ENCODE measurements at regions of chr12 and their contacts with region 1.

Region 1: DNA sequence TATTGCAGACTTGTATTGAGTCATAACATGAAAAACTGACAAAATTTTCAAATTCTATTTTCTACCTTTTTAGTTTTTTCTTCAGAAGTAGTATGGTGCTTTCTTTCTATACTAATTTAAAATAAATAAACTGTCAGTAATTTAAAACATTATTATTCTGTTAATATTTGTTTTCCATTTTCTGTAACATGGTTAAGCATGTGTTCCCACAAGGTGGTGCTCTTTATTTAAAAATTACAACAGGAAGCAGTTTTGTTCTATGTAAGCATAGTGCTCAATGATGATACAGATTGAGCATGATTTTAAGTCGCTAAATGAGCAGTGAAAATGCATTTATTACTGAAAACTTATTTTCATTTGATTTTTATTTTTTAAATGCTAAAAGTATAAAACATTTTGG is 114.6 kb downstream of the PPFIA2 start:
- DNase-seq: no peak
- ATAC-seq: peak; percentile 77
- H3K4me3 ChIP-seq: no peak overlapping the region
- H3K27ac ChIP-seq: no peak overlapping the region
- H3K4me1 ChIP-seq: no peaks in the 10 kb centered on the region
- H3K27me3 ChIP-seq: no peaks in the 10 kb centered on the region
- CTCF ChIP-seq: peak in 2 of 3 experiments; percentile 33 to 61; a peak in 4 of 6 replicates
- EP300 ChIP-seq: no peak
- POLR2A ChIP-seq: no peak
- RAD21 ChIP-seq: peak; percentile 65

Region 2: GRCh38 chr12:81468206-81468605 is 176.3 kb before region 1 on chr12:
- CTCF ChIA-PET with region 1: no interaction called
- POLR2A ChIA-PET with region 1: no interaction called
- RAD21 ChIA-PET with region 1: no interaction called
- SMC1A ChIA-PET with region 1: no interaction called
- in situ Hi-C with region 1: no loop called
- intact Hi-C with region 1: no loop called
- DNase-seq: no peak
- ATAC-seq: no peak
- H3K4me3 ChIP-seq: no peak overlapping the region
- H3K27ac ChIP-seq: no peak overlapping the region
- H3K4me1 ChIP-seq: no peaks in the 10 kb centered on the region
- H3K27me3 ChIP-seq: no peaks in the 10 kb centered on the region
- CTCF ChIP-seq: no peak
- EP300 ChIP-seq: no peak
- POLR2A ChIP-seq: no peak
- RAD21 ChIP-seq: no peak

Region 3: GRCh38 chr12:81992461-81992860 is 348.0 kb after region 1 on chr12:
- CTCF ChIA-PET with region 1: interaction called, 14 read pairs
- POLR2A ChIA-PET with region 1: no interaction called
- RAD21 ChIA-PET with region 1: interaction called, 23 read pairs
- SMC1A ChIA-PET with region 1: interaction called, 31 read pairs
- in situ Hi-C with region 1: no loop called
- intact Hi-C with region 1: loop called (anchors 5 kb)
- DNase-seq: no peak
- ATAC-seq: peak; percentile 92
- H3K4me3 ChIP-seq: no peak overlapping the region
- H3K27ac ChIP-seq: no peak overlapping the region
- H3K4me1 ChIP-seq: no peaks in the 10 kb centered on the region
- H3K27me3 ChIP-seq: no peaks in the 10 kb centered on the region
- CTCF ChIP-seq: peak in 2 of 3 experiments; percentile 9 to 36; a peak in 3 of 6 replicates
- EP300 ChIP-seq: no peak
- POLR2A ChIP-seq: no peak
- RAD21 ChIP-seq: peak; percentile 10; the same call in 1 of the 2 replicates

Region 4: GRCh38 chr12:82176761-82177490 is 532.4 kb after region 1 on chr12:
- CTCF ChIA-PET with region 1: interaction called, 10 read pairs
- POLR2A ChIA-PET with region 1: no interaction called
- RAD21 ChIA-PET with region 1: interaction called, 4 read pairs
- SMC1A ChIA-PET with region 1: interaction called, 3 read pairs
- in situ Hi-C with region 1: no loop called
- intact Hi-C with region 1: no loop called
- DNase-seq: no peak
- ATAC-seq: no peak
- H3K4me3 ChIP-seq: no peak overlapping the region
- H3K27ac ChIP-seq: no peak overlapping the region
- H3K4me1 ChIP-seq: no peaks in the 10 kb centered on the region
- H3K27me3 ChIP-seq: no peaks in the 10 kb centered on the region
- CTCF ChIP-seq: no peak
- EP300 ChIP-seq: no peak
- POLR2A ChIP-seq: no peak
- RAD21 ChIP-seq: no peak

Region 5: GRCh38 chr12:82326905-82327503 is 682.5 kb after region 1 on chr12:
- CTCF ChIA-PET with region 1: interaction called, 8 read pairs
- POLR2A ChIA-PET with region 1: no interaction called
- RAD21 ChIA-PET with region 1: interaction called, 12 read pairs
- SMC1A ChIA-PET with region 1: interaction called, 9 read pairs
- in situ Hi-C with region 1: no loop called
- intact Hi-C with region 1: loop called (anchors 1 kb)
- DNase-seq: no peak
- ATAC-seq: peak; percentile 49; the same call in 1 of the 3 replicates
- H3K4me3 ChIP-seq: no peak overlapping the region
- H3K27ac ChIP-seq: no peak overlapping the region
- H3K4me1 ChIP-seq: no peaks in the 10 kb centered on the region
- H3K27me3 ChIP-seq: no peaks in the 10 kb centered on the region
- CTCF ChIP-seq: peak in 2 of 3 experiments; percentile 24 to 28; a peak in 3 of 6 replicates
- EP300 ChIP-seq: no peak
- POLR2A ChIP-seq: no peak
- RAD21 ChIP-seq: peak; percentile 44

Region 6: GRCh38 chr12:82358200-82359114 is 714.0 kb after region 1 on chr12 and contains the starts of genes CCDC59 and METTL25:
- CTCF ChIA-PET with region 1: interaction called, 20 read pairs
- POLR2A ChIA-PET with region 1: no interaction called
- RAD21 ChIA-PET with region 1: interaction called, 5 read pairs
- SMC1A ChIA-PET with region 1: interaction called, 12 read pairs
- in situ Hi-C with region 1: no loop called
- intact Hi-C with region 1: no loop called
- DNase-seq: peak; percentile 90
- ATAC-seq: peak; percentile 93
- H3K4me3 ChIP-seq: peak within 1 kb of the TSS; percentile 91
- H3K27ac ChIP-seq: peak within 1 kb of the TSS; percentile 99
- H3K4me1 ChIP-seq: no peaks in the 10 kb centered on the region
- H3K27me3 ChIP-seq: no peaks in the 10 kb centered on the region
- CTCF ChIP-seq: peak; percentile 60 to 96 (median 95)
- EP300 ChIP-seq: peak; percentile 73 to 87; a peak in 3 of 4 replicates
- POLR2A ChIP-seq: peak; percentile 99
- RAD21 ChIP-seq: peak; percentile 40
- polyA plus RNA-seq, gene CCDC59: 94.7 to 98.6 TPM
- polyA plus RNA-seq, gene METTL25: 6.6 to 7.0 TPM

Measured in GM12878 (cell line).